ENCODE measurements at regions of chr2 and their contacts with region 1.

Region 1: GRCh38 chr2:132547074-132547687 is 122.8 kb downstream of the LYPD1 start:
- DNase-seq: peak; percentile 61
- H3K4me3 ChIP-seq: no peak overlapping the region
- H3K27ac ChIP-seq: no peak overlapping the region
- H3K27me3 ChIP-seq: no peaks in the 10 kb centered on the region
- CTCF ChIP-seq: peak; percentile 74

Region 2: GRCh38 chr2:132519566-132519965 is 27.6 kb before region 1 on chr2:
- CTCF ChIA-PET with region 1: interaction called, 21 read pairs
- POLR2A ChIA-PET with region 1: no interaction called
- DNase-seq: no peak
- H3K4me3 ChIP-seq: no peak overlapping the region
- H3K27ac ChIP-seq: no peak overlapping the region
- H3K27me3 ChIP-seq: no peaks in the 10 kb centered on the region
- CTCF ChIP-seq: no peak

Region 3: DNA sequence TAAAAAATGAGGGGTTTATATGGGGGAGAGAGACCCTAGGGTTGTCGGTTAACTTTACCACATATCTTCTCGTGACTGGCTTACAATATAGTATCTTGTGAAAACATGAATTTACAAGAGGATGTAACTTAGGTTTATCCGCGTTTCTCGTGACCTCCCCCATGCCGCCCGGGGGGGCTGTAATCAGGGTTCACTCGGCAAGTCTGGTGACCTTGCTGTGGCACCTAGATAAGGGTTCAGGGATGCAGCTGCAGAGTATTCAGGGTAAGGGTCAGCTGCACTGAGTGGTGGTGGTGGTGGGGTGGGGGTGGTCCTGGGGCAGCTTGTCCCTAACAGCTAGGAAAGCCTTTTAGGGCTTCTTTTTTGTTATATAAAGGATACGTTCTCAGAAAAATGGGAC is 10.5 kb after region 1 on chr2:
- CTCF ChIA-PET with region 1: interaction called, 28 read pairs
- POLR2A ChIA-PET with region 1: no interaction called
- DNase-seq: no peak
- H3K4me3 ChIP-seq: no peak overlapping the region
- H3K27ac ChIP-seq: no peak overlapping the region
- H3K27me3 ChIP-seq: peaks cover 2% of the 10 kb centered on the region
- CTCF ChIP-seq: no peak

Region 4: GRCh38 chr2:132766573-132766972 is 219.4 kb after region 1 on chr2:
- CTCF ChIA-PET with region 1: interaction called, 10 read pairs
- POLR2A ChIA-PET with region 1: no interaction called
- DNase-seq: no peak
- H3K4me3 ChIP-seq: no peak overlapping the region
- H3K27ac ChIP-seq: no peak overlapping the region
- H3K27me3 ChIP-seq: no peaks in the 10 kb centered on the region
- CTCF ChIP-seq: no peak

Region 5: DNA sequence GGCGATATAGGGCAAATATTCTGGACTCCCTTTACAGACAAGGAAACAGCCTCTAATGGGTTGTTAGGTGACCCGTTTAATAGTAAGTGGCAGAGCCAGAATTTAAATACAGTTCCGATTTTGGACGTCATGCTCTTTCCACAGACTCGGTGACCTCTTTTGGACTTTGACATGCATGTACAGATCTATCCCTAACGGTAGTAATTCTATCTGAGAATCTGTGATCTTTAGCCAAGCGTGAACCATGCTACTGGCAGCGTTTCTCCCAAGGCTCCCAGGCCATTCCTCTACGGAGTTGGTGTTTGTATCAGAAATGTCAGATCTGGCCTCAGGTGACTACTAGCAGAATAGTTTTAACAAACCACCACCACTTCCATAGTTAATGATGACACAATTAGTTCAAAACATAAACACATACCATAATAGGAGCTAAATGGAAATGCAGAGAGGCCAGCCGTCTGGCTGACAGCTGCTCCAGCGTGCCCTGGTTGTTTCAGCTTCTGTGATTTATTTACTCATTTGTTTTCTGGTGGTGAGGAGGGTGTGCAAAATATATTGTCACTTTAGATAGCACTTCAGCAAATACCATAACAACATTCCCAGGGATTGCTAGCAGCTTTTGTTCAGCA is 427.4 kb after region 1 on chr2:
- CTCF ChIA-PET with region 1: no interaction called
- POLR2A ChIA-PET with region 1: no interaction called
- DNase-seq: peak; percentile 36
- H3K4me3 ChIP-seq: no peak overlapping the region
- H3K27ac ChIP-seq: no peak overlapping the region
- H3K27me3 ChIP-seq: no peaks in the 10 kb centered on the region
- CTCF ChIP-seq: no peak

Region 6: DNA sequence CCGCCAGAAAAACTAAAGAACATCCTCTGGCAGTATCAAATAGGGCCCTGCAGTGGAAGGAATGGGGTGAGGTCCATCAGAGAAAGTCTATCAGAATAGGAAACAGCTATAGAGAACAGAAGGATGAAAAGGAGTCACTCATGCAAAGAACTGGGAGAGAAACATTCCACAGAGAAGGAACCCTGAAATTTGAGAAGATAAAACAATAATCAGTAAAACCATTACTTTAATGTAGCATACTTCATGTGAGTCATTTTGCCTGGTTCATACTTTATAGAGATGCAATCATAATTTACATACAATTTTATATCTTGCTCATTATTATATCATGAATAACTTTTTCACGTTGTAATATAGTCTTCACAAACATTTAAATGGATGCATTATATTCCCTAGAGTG is 618.9 kb after region 1 on chr2:
- CTCF ChIA-PET with region 1: interaction called, 21 read pairs
- POLR2A ChIA-PET with region 1: no interaction called
- DNase-seq: no peak
- H3K4me3 ChIP-seq: no peak overlapping the region
- H3K27ac ChIP-seq: no peak overlapping the region
- H3K27me3 ChIP-seq: no peaks in the 10 kb centered on the region
- CTCF ChIP-seq: no peak

Region 7: GRCh38 chr2:133171393-133172004 is 624.3 kb after region 1 on chr2:
- CTCF ChIA-PET with region 1: interaction called, 21 read pairs
- POLR2A ChIA-PET with region 1: no interaction called
- DNase-seq: peak; percentile 43
- H3K4me3 ChIP-seq: no peak overlapping the region
- H3K27ac ChIP-seq: no peak overlapping the region
- H3K27me3 ChIP-seq: no peaks in the 10 kb centered on the region
- CTCF ChIP-seq: peak; percentile 74

Region 8: DNA sequence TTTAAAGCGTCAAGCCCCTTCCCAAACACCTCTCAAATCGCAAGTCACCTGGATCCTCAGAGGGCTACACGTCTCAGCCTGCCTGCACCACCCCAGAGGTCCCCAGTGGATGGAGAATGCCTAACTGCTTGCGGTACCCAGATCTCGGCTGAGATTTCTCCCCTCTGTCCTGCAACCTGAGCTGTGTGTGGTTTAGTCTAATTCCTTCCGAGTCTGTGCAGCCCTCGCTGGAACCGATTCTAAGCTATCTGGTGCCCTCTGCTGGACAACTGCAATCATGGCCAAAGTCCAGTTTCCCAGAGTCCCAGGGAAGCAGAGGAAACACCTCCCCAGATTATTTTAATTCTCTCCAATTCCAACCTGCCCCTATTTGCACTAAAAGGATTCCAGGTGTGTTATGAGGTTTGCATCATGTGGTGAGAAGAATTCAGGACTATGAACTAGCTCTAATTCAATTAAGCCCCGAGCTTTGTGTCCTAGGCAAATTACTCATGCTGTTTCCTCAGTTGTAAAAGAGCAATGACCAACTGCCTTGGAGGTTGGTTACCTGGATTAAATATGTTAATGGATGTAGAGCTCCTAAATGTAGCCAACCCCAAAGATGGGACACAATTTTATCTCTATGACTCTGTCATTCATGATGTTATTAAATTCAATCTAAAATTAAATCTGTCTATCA is 1297.2 kb after region 1 on chr2:
- CTCF ChIA-PET with region 1: interaction called, 39 read pairs
- POLR2A ChIA-PET with region 1: no interaction called
- DNase-seq: peak; percentile 77
- H3K4me3 ChIP-seq: no peak overlapping the region
- H3K27ac ChIP-seq: peak overlapping the region; percentile 61
- H3K27me3 ChIP-seq: no peaks in the 10 kb centered on the region
- CTCF ChIP-seq: peak; percentile 89